ENCODE measurements at regions of chr6 and their contacts with region 1.

Region 1: GRCh38 chr6:150813319-150813992 is 52.0 kb upstream of the MTHFD1L start:
- DNase-seq: no peak
- ATAC-seq: no peak
- H3K4me3 ChIP-seq: no peak overlapping the region
- H3K4me3 Mint-ChIP-seq: no peak overlapping the region
- H3K27ac ChIP-seq: no peak overlapping the region
- H3K27ac Mint-ChIP-seq: peak overlapping the region in 1 of 9 donors; percentile 61
- H3K4me1 ChIP-seq: no peaks in the 10 kb centered on the region
- H3K4me1 Mint-ChIP-seq: peaks cover 0 to 5% (median 0%) of the 10 kb centered on the region in 7 donors
- H3K27me3 ChIP-seq: no peaks in the 10 kb centered on the region
- H3K27me3 Mint-ChIP-seq: peaks cover 7 to 50% (median 24%) of the 10 kb centered on the region in 5 donors

Region 2: GRCh38 chr6:150016324-150017185 is 796.9 kb before region 1 on chr6:
- CTCF ChIA-PET with region 1: no interaction called
- POLR2A ChIA-PET with region 1: no interaction called
- intact Hi-C with region 1: loop called in 1 of 2 experiments (anchors 2 kb)
- DNase-seq: peak in 8 of 9 donors; percentile 38 to 77 (median 68)
- ATAC-seq: peak; percentile 85
- H3K4me3 ChIP-seq: no peak overlapping the region
- H3K4me3 Mint-ChIP-seq: no peak overlapping the region
- H3K27ac ChIP-seq: no peak overlapping the region
- H3K27ac Mint-ChIP-seq: peak overlapping the region in 1 of 9 donors; percentile 1
- H3K4me1 ChIP-seq: peaks cover 0 to 2% of the 10 kb centered on the region in 2 donors
- H3K4me1 Mint-ChIP-seq: peaks cover 10 to 23% (median 15%) of the 10 kb centered on the region in 7 donors
- H3K27me3 ChIP-seq: peaks cover 11 to 16% of the 10 kb centered on the region in 2 donors
- H3K27me3 Mint-ChIP-seq: peaks cover 60 to 80% (median 66%) of the 10 kb centered on the region in 5 donors

Region 3: DNA sequence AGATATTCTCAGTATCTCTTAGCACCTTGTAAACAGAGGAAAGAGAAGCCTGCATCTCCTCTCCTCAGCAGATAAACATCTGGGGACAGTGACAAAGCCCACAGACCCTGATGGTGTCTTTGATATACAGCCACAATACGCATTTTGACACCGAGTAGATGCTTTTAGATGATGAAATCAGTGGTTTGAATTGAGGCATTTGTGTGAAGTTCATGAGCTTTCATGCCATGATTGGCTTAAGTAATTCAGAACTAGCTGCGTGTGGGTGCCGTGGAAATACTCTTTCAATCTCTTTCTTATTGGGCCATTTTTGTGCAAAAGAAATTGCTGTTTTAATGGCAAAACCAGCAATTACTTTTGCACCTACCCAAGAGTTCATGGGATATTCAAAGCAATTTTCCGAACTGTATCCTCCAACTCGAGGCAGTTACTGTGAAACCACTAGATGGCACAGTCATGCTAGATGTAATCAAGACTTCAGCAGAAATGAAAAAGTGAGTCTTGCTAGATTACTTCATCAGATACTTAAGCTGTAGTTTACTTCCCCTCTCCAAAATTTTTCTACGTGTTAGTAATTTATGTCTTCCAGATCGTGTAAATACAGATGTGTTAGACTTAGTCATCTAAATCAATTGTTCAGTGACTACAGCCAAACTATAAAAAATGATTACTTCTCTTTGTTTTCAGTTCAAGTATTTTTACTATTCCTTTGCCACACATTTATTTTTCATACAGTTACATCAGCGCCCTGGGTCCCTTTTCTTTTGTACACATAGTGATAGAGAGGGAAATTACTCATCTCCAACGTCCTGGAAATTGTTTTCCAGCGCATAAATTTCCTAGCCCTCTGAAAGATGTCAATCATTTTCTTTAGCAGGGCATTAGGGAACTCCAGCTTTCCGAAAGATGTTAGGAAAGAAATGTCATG is 395.3 kb before region 1 on chr6:
- CTCF ChIA-PET with region 1: interaction called, 37 read pairs
- POLR2A ChIA-PET with region 1: no interaction called
- intact Hi-C with region 1: loop called in 1 of 2 experiments (anchors 1 kb)
- DNase-seq: peak in 6 of 9 donors; percentile 24 to 56 (median 32)
- ATAC-seq: peak; percentile 81
- H3K4me3 ChIP-seq: peak overlapping the region; percentile 53
- H3K4me3 Mint-ChIP-seq: peak overlapping the region; percentile 65 to 88 (median 80)
- H3K27ac ChIP-seq: no peak overlapping the region
- H3K27ac Mint-ChIP-seq: peak overlapping the region in 2 of 9 donors; percentile 26
- H3K4me1 ChIP-seq: peaks cover 0 to 4% of the 10 kb centered on the region in 2 donors
- H3K4me1 Mint-ChIP-seq: peaks cover 2 to 15% (median 10%) of the 10 kb centered on the region in 7 donors
- H3K27me3 ChIP-seq: no peaks in the 10 kb centered on the region
- H3K27me3 Mint-ChIP-seq: peaks cover 27 to 41% (median 29%) of the 10 kb centered on the region in 5 donors

Region 4: GRCh38 chr6:150865406-150866146 is 52.1 kb after region 1 on chr6 and contains the start of gene MTHFD1L:
- CTCF ChIA-PET with region 1: no interaction called
- POLR2A ChIA-PET with region 1: no interaction called
- intact Hi-C with region 1: loop called in 1 of 2 experiments (anchors 1 kb)
- DNase-seq: peak; percentile 46 to 84 (median 55)
- ATAC-seq: peak; percentile 83
- H3K4me3 ChIP-seq: peak within 1 kb of the TSS; percentile 72
- H3K4me3 Mint-ChIP-seq: peak within 1 kb of the TSS; percentile 83 to 97 (median 88)
- H3K27ac ChIP-seq: peak within 1 kb of the TSS; percentile 61
- H3K27ac Mint-ChIP-seq: peak within 1 kb of the TSS in 8 of 9 donors; percentile 28 to 89 (median 70)
- H3K4me1 ChIP-seq: peaks cover 5 to 6% of the 10 kb centered on the region in 2 donors
- H3K4me1 Mint-ChIP-seq: peaks cover 10 to 44% (median 14%) of the 10 kb centered on the region in 7 donors
- H3K27me3 ChIP-seq: no peaks in the 10 kb centered on the region
- H3K27me3 Mint-ChIP-seq: peaks cover 8 to 18% (median 16%) of the 10 kb centered on the region in 5 donors
- total RNA-seq, gene MTHFD1L: 6.4 to 57.8 (median 9.3) TPM

Region 5: DNA sequence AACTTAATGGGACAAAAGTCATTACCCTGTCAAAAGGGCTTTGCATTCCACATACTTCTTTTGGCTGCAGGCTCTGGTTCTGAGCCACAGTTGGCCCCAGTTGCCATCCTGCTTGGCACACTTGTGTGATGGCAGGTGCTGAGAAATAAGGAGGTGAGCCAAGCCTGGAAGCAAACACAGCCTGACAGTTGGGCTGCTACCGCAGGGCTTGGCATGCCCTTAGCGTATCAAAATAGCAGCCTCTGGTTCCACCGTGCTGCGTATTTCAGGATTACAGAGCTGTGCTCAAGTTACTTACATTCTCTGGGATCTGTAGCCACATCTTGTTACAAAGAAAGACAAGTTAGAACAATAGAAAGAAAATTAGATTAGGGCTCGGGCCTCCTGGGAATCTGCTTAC is 63.1 kb after region 1 on chr6:
- CTCF ChIA-PET with region 1: no interaction called
- POLR2A ChIA-PET with region 1: no interaction called
- intact Hi-C with region 1: no loop called
- DNase-seq: no peak
- ATAC-seq: no peak
- H3K4me3 ChIP-seq: no peak overlapping the region
- H3K4me3 Mint-ChIP-seq: no peak overlapping the region
- H3K27ac ChIP-seq: no peak overlapping the region
- H3K27ac Mint-ChIP-seq: no peak overlapping the region
- H3K4me1 ChIP-seq: no peaks in the 10 kb centered on the region
- H3K4me1 Mint-ChIP-seq: peaks cover 0 to 20% (median 3%) of the 10 kb centered on the region in 7 donors
- H3K27me3 ChIP-seq: no peaks in the 10 kb centered on the region
- H3K27me3 Mint-ChIP-seq: no peaks in the 10 kb centered on the region

Region 6: DNA sequence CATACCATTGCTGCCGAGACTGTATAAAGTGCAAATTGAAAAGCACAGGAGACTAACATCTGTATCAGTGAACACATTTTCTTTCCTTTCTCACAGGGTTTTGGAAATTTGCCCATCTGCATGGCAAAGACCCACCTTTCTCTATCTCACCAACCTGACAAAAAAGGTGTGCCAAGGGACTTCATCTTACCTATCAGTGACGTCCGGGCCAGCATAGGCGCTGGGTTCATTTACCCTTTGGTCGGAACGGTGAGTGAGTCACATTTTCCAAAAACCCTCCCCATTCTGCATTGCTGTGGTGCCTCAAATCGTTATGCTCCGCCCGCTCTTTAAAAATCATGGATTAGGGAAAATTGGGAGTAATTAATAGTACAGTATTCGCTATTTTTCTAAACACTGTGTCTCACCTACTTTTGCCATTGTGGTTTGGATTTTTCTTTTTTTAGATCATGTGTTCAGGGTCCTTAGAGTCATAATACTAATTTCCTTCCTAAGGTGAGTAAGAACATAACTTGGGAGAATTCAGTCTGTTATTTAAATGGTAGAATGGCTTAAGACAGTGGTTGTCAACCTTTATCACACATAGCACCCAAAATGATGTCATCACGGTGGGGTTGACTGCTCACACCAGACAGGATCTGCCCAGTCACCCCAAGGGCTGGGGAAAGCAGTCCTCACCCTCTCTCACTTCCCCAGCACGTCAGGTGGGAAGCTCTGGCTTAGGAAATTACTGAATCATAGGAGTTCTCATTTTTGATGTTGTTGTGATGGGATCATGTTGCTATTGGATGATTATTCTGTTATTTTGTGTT is 223.6 kb after region 1 on chr6:
- CTCF ChIA-PET with region 1: no interaction called
- POLR2A ChIA-PET with region 1: no interaction called
- intact Hi-C with region 1: no loop called
- DNase-seq: no peak
- ATAC-seq: no peak
- H3K4me3 ChIP-seq: no peak overlapping the region
- H3K4me3 Mint-ChIP-seq: no peak overlapping the region
- H3K27ac ChIP-seq: no peak overlapping the region
- H3K27ac Mint-ChIP-seq: no peak overlapping the region
- H3K4me1 ChIP-seq: no peaks in the 10 kb centered on the region
- H3K4me1 Mint-ChIP-seq: peaks cover 0 to 9% (median 0%) of the 10 kb centered on the region in 7 donors
- H3K27me3 ChIP-seq: no peaks in the 10 kb centered on the region
- H3K27me3 Mint-ChIP-seq: no peaks in the 10 kb centered on the region

Measured in naive thymus-derived CD4-positive, alpha-beta T cell (primary cell).